Activated CD8-positive, alpha-beta T cell treated with anti-CD3 and anti-CD28 coated beads for 36 hours (primary cell): ENCODE measurements at regions of chr11 and their contacts with region 1.

Region 1: DNA sequence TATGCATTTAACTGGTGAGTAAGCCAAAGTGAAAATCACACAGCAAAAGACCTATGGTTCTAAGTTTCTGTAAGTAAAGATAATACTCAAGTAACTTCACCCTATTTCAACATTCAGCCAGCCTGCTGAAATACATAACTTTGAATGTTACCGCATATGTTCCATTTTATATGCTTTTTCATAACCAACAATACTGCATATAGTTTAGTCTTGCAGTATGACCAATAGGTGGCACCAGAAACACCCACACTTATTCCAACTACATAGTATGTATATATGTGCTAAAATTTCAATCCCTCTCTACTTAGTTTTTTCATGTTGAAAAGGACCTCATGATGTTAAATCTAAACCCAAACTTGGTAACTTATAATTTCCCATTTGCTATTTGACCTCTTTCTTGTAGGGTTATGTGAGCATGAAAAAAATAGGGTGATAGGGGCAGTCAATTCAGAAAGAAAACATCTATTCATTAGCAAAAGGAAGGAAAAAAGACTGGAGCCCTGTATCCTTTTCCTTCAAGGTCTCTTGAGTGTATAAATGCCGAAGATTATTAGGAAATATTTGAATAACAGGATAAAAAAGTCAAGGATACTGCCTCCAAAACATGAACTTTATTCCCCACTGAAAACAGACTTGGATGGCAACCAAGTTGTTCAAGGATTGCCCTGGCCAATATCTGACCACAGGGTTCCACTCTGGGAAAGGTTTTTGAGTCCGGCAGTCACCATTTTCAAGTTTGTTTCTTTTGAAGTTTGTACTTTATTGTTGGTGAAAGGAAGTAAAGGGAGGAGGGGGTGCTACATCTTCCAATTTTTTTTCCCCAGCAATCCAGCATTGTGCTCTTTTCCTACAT is 23.8 kb upstream of the FZD4 start:
- DNase-seq: peak; percentile 8
- ATAC-seq: peak; percentile 71
- H3K4me3 Mint-ChIP-seq: no peak overlapping the region
- H3K27ac Mint-ChIP-seq: no peak overlapping the region
- H3K4me1 Mint-ChIP-seq: no peaks in the 10 kb centered on the region
- H3K27me3 Mint-ChIP-seq: no peaks in the 10 kb centered on the region
- CTCF ChIP-seq: peak; percentile 68

Region 2: DNA sequence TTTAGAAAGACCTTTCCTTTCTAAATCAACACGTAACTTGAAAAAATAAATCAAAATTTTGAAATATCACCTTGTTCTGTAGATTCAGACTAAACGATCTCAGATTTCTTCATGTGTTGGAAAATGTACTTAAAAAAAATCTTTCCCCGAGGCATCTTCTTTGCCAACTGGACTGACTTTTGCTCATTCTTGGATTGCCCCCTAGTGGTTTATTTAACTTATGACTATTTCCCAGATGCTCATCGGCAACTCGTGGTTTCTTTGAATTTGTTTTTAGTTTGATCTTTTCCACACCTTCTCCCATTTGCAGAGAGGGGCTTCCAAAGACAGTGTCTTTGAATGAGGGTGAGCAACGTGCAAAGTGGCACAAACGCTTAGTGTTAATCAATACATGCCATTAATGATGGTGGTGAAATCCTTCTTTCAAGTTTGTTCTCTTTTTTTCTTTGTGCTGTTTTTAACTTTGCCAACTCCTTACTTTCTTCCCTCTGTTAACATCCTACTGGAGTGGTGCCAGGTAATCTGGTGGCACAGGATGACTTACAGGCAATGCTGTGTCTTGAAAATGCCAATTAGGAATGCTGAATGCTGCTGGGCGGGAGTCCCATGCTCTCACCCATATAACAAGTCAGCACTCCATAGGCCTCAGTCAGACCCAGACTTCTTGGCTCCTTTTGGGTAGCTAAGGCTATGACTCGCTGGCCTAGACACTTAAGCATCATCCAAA is 160.4 kb before region 1 on chr11:
- CTCF ChIA-PET with region 1: no interaction called
- POLR2A ChIA-PET with region 1: no interaction called
- intact Hi-C with region 1: no loop called
- DNase-seq: no peak
- ATAC-seq: peak; percentile 51
- H3K4me3 Mint-ChIP-seq: no peak overlapping the region
- H3K27ac Mint-ChIP-seq: no peak overlapping the region
- H3K4me1 Mint-ChIP-seq: no peaks in the 10 kb centered on the region
- H3K27me3 Mint-ChIP-seq: peaks cover 24% of the 10 kb centered on the region
- CTCF ChIP-seq: peak; percentile 91

Region 3: GRCh38 chr11:86848861-86849260 is 130.1 kb before region 1 on chr11:
- CTCF ChIA-PET with region 1: no interaction called
- POLR2A ChIA-PET with region 1: no interaction called
- intact Hi-C with region 1: no loop called
- DNase-seq: no peak
- ATAC-seq: no peak
- H3K4me3 Mint-ChIP-seq: no peak overlapping the region
- H3K27ac Mint-ChIP-seq: no peak overlapping the region
- H3K4me1 Mint-ChIP-seq: no peaks in the 10 kb centered on the region
- H3K27me3 Mint-ChIP-seq: no peaks in the 10 kb centered on the region
- CTCF ChIP-seq: no peak

Region 4: DNA sequence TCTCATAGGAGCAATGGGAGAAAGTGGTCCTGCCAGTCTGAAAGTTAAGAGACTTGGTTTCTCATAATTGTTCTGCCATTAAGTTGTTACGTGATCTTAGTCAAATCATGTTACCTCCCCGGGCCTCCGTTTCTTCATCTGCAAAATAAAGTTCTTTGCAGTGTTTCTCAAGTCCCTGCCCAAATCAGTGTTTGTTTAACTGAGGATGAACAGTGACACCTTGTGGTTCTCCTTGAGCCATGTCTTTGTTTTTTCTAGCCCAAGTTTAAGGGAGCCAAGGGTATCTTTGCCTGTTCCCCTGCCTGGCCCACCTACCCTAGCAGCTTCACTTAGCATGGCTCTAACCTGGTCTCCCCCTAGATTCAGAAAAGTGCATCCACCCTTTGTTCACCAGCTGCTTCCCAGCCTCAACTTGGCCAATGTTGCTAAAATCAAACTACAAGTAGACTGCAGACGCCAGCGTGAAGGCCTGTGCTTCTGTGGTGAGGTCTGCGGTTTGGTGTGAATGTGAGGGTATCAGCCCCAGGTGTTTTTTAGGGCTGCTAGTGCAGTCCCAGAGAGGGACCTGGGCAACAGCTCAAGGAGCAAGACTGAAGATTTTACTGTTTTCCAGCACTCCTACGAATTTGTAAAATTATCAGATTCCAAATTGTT is 59.3 kb before region 1 on chr11:
- CTCF ChIA-PET with region 1: no interaction called
- POLR2A ChIA-PET with region 1: no interaction called
- intact Hi-C with region 1: no loop called
- DNase-seq: peak; percentile 3
- ATAC-seq: no peak
- H3K4me3 Mint-ChIP-seq: no peak overlapping the region
- H3K27ac Mint-ChIP-seq: no peak overlapping the region
- H3K4me1 Mint-ChIP-seq: no peaks in the 10 kb centered on the region
- H3K27me3 Mint-ChIP-seq: peaks cover 2% of the 10 kb centered on the region
- CTCF ChIP-seq: peak; percentile 24

Region 5: DNA sequence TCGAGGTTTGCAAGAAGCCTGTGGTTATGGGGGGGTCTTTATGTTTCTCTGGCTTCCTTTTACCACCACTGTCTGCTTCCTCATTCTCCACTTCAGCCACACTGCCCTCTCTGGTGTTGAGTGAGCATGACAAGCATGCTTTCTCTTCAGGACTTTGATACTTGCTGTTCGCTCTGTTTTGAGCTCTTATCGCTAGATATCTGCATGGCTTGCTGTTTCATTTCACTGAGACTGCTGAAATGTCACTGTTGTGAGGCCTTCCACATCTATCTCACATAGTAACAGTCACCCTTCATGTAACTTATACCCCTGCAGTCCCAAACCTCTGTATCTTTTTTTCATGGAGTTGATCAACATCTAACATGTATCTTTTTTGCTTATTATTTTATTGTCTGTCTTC is 118.6 kb after region 1 on chr11:
- CTCF ChIA-PET with region 1: no interaction called
- POLR2A ChIA-PET with region 1: no interaction called
- intact Hi-C with region 1: loop called (anchors 2 kb)
- DNase-seq: peak; percentile 61
- ATAC-seq: peak; percentile 97
- H3K4me3 Mint-ChIP-seq: no peak overlapping the region
- H3K27ac Mint-ChIP-seq: no peak overlapping the region
- H3K4me1 Mint-ChIP-seq: peaks cover 7% of the 10 kb centered on the region
- H3K27me3 Mint-ChIP-seq: no peaks in the 10 kb centered on the region
- CTCF ChIP-seq: peak; percentile 61

Region 6: GRCh38 chr11:87290304-87290922 is 311.4 kb after region 1 on chr11:
- CTCF ChIA-PET with region 1: interaction called, 6 read pairs
- POLR2A ChIA-PET with region 1: no interaction called
- intact Hi-C with region 1: loop called (anchors 5 kb)
- DNase-seq: no peak
- ATAC-seq: no peak
- H3K4me3 Mint-ChIP-seq: no peak overlapping the region
- H3K27ac Mint-ChIP-seq: no peak overlapping the region
- H3K4me1 Mint-ChIP-seq: no peaks in the 10 kb centered on the region
- H3K27me3 Mint-ChIP-seq: no peaks in the 10 kb centered on the region
- CTCF ChIP-seq: peak; percentile 84